ENCODE measurements at regions of chr10 and their contacts with region 1.

Region 1: DNA sequence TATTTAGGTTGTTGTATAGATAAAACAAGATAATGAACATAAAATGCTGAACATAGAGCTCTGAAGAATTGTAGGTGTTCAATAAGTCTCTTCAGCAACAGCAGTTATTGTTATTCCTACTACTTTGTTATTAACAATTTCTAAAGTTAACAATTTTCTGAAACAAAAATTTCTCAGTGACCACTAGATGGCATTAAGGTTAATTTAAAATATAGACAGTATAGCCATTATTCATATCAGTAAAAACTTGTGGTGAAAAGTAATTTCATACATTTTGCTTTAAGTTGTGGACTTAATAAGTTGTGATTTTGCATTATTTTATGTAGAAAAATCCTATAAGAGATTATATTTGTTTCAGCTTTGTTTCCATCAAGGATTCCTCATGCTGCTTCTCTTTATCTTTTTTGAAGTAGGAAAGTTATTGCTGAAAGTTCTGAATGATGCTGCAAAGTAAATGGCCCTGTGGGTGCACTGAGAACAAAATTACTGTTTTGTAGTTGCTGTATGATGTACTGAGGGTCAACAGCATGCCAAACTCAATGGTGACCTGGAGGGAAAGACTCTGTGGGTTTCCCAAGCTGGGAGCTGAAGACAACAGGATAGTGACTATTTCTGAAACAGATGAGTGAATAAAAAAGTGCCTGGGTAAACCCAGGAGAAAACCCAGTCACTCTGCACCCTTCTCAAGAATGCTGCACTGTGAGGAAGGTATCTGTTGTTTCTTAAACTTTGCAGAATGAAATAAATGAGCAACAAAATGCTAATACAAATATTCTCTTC is 253.6 kb downstream of the KIF20B start:
- DNase-seq: no peak
- H3K4me3 ChIP-seq: no peak overlapping the region
- H3K27ac ChIP-seq: no peak overlapping the region
- H3K4me1 ChIP-seq: no peaks in the 10 kb centered on the region
- H3K27me3 ChIP-seq: peaks cover 14% of the 10 kb centered on the region
- CTCF ChIP-seq: peak; percentile 59

Region 2: DNA sequence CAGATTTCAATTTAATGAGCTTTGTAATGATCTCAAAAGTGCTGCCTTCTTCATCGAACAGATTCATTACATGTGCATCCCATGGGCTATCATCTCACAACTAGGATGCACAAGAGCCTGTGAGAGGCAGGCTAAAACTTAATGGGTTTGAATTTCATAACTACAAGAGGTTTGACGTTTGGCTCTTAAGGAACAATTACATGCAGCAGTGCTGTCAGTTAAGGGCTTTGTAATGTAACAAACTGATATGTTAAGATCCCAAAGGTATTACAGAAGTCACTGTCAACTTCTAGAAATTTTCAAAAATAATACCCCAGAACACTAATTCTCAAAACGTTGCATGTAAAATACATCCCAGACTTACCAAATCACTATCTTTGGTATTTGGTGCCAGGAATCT is 220.4 kb before region 1 on chr10:
- CTCF ChIA-PET with region 1: no interaction called
- POLR2A ChIA-PET with region 1: no interaction called
- intact Hi-C with region 1: no loop called
- DNase-seq: no peak
- H3K4me3 ChIP-seq: no peak overlapping the region
- H3K27ac ChIP-seq: no peak overlapping the region
- H3K4me1 ChIP-seq: no peaks in the 10 kb centered on the region
- H3K27me3 ChIP-seq: no peaks in the 10 kb centered on the region
- CTCF ChIP-seq: no peak

Region 3: DNA sequence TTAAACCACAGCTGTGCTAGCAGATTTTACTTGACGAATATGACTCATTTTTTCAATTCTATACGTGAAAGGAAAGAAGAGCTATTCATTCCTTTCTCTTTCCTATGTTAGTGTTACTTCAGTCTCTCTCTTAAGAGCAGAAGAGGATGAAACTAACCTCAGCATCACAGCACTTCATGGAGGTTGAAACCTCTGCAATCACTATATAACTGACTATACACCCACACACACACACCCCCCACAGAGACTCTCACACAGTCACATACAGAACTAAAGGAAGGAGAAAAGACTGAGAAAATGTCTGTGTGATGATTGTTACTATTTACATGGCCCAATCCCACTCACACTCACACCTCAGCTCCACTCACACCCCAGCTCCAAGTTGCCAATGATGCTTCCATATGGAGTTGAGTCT is 149.4 kb before region 1 on chr10:
- CTCF ChIA-PET with region 1: no interaction called
- POLR2A ChIA-PET with region 1: no interaction called
- intact Hi-C with region 1: no loop called
- DNase-seq: no peak
- H3K4me3 ChIP-seq: no peak overlapping the region
- H3K27ac ChIP-seq: no peak overlapping the region
- H3K4me1 ChIP-seq: no peaks in the 10 kb centered on the region
- H3K27me3 ChIP-seq: peaks cover 67% of the 10 kb centered on the region
- CTCF ChIP-seq: no peak

Region 4: GRCh38 chr10:90592638-90593302 is 637.8 kb after region 1 on chr10:
- CTCF ChIA-PET with region 1: no interaction called
- POLR2A ChIA-PET with region 1: no interaction called
- intact Hi-C with region 1: loop called (anchors 10 kb)
- DNase-seq: peak; percentile 53
- H3K4me3 ChIP-seq: no peak overlapping the region
- H3K27ac ChIP-seq: no peak overlapping the region
- H3K4me1 ChIP-seq: no peaks in the 10 kb centered on the region
- H3K27me3 ChIP-seq: peaks cover 46% of the 10 kb centered on the region
- CTCF ChIP-seq: peak; percentile 41; the same call in 1 of the 2 replicates